ENCODE measurements at regions of chr14 and their contacts with region 1.

Region 1: GRCh38 chr14:101809671-101810514 is 48.4 kb downstream of the PPP2R5C start:
- DNase-seq: peak; percentile 92
- ATAC-seq: peak; percentile 90
- H3K4me3 Mint-ChIP-seq: peak overlapping the region; percentile 79
- H3K27ac Mint-ChIP-seq: peak overlapping the region; percentile 95
- H3K4me1 Mint-ChIP-seq: peaks cover 38% of the 10 kb centered on the region
- H3K27me3 Mint-ChIP-seq: no peaks in the 10 kb centered on the region
- CTCF ChIP-seq: no peak

Region 2: GRCh38 chr14:101525640-101526527 is 284.0 kb before region 1 on chr14:
- CTCF ChIA-PET with region 1: no interaction called
- POLR2A ChIA-PET with region 1: no interaction called
- intact Hi-C with region 1: no loop called
- DNase-seq: no peak
- ATAC-seq: no peak
- H3K4me3 Mint-ChIP-seq: no peak overlapping the region
- H3K27ac Mint-ChIP-seq: no peak overlapping the region
- H3K4me1 Mint-ChIP-seq: peaks cover 8% of the 10 kb centered on the region
- H3K27me3 Mint-ChIP-seq: no peaks in the 10 kb centered on the region
- CTCF ChIP-seq: no peak

Region 3: GRCh38 chr14:101791919-101792572 is 17.8 kb before region 1 on chr14:
- CTCF ChIA-PET with region 1: interaction called, 5 read pairs
- POLR2A ChIA-PET with region 1: interaction called, 22 read pairs
- intact Hi-C with region 1: no loop called
- DNase-seq: no peak
- ATAC-seq: peak; percentile 89
- H3K4me3 Mint-ChIP-seq: peak overlapping the region; percentile 33
- H3K27ac Mint-ChIP-seq: peak overlapping the region; percentile 82
- H3K4me1 Mint-ChIP-seq: peaks cover 31% of the 10 kb centered on the region
- H3K27me3 Mint-ChIP-seq: no peaks in the 10 kb centered on the region
- CTCF ChIP-seq: no peak

Region 4: DNA sequence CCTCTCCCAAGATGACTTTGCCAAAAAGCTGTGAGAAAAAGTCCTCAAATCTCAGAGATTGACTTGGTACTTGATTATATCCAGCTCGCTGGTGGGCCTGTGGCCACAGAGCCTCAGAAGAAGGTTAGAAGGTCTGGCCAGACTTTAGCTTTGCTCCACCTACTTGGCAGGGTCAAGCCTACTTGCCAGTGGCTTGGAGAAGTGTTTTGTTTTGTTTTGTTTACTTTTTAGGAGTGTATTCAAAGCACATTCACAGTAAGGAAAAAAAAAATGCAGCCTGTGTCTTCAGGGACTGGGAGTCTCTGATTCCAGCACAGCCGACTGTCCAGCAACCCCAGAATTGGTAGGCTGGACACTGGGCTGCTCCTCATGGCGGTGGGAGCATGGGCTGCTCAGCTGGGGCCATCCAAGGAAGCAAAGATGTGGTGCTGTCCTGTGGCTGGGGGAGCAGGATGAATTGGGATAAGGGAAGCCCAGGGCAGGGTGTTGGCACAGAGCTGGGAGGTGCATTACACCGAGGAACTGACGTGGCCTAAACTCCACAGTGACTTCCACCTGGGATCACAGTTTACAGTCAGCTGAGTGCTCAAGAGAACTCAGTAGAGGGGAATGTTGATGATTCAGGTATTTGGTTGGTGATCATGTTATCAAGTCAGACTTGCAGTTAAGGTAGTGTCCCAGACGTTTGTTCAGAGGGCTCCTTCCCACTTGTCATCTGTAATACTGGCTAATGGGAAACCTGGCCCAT is 25.1 kb after region 1 on chr14:
- CTCF ChIA-PET with region 1: interaction called, 4 read pairs
- POLR2A ChIA-PET with region 1: interaction called, 30 read pairs
- intact Hi-C with region 1: no loop called
- DNase-seq: no peak
- ATAC-seq: no peak
- H3K4me3 Mint-ChIP-seq: no peak overlapping the region
- H3K27ac Mint-ChIP-seq: peak overlapping the region; percentile 80
- H3K4me1 Mint-ChIP-seq: peaks cover 85% of the 10 kb centered on the region
- H3K27me3 Mint-ChIP-seq: no peaks in the 10 kb centered on the region
- CTCF ChIP-seq: no peak

Region 5: GRCh38 chr14:101843665-101844064 is 33.8 kb after region 1 on chr14:
- CTCF ChIA-PET with region 1: interaction called, 10 read pairs
- POLR2A ChIA-PET with region 1: interaction called, 7 read pairs
- intact Hi-C with region 1: no loop called
- DNase-seq: peak; percentile 81
- ATAC-seq: peak; percentile 65
- H3K4me3 Mint-ChIP-seq: no peak overlapping the region
- H3K27ac Mint-ChIP-seq: peak overlapping the region; percentile 79
- H3K4me1 Mint-ChIP-seq: peaks cover 82% of the 10 kb centered on the region
- H3K27me3 Mint-ChIP-seq: no peaks in the 10 kb centered on the region
- CTCF ChIP-seq: peak; percentile 64

Region 6: DNA sequence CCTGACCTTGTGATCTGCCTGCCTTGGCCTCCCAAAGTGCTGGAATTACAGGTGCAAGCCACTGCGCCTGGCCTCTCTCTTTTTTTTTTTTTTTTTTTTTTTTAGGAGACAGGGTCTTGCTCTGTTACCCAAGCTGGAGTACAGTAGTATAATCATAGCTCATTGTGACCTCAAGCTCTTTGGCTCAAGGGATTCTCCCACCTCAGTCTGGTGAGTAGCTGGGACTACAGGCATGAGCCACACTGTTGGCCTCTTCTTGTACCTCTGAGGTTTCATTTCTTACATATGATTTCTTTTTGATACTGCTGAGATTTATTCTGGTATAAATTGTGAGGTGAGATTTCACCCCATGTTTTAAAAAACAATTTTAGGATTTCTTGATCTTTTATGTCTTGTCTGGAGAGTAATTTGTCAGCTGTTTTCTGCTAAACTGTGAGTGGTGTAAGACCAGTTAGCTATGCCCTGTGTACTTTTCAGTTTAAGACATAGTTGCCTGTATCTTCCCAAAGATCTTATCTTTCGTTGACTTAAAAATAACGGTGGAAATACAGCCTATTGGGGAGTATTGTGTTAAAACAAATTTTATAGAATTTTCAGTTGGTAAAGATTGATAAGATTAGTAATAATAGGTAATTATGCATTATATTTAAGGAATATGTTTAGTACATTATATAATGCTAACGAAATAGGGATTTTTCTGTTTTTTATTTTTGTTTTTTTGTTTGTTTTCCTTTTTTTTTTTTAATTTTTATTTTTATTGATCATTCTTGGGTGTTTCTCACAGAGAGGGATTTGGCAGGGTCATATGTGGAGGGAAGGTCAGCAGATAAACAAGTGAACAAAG is 361.5 kb after region 1 on chr14:
- CTCF ChIA-PET with region 1: no interaction called
- POLR2A ChIA-PET with region 1: no interaction called
- intact Hi-C with region 1: no loop called
- DNase-seq: no peak
- ATAC-seq: no peak
- H3K4me3 Mint-ChIP-seq: no peak overlapping the region
- H3K27ac Mint-ChIP-seq: no peak overlapping the region
- H3K4me1 Mint-ChIP-seq: peaks cover 38% of the 10 kb centered on the region
- H3K27me3 Mint-ChIP-seq: no peaks in the 10 kb centered on the region
- CTCF ChIP-seq: no peak

Measured in activated CD8-positive, alpha-beta T cell treated with anti-CD3 and anti-CD28 coated beads for 36 hours (primary cell).